ENCODE measurements at regions of chr16 and their contacts with region 1.

Region 1: DNA sequence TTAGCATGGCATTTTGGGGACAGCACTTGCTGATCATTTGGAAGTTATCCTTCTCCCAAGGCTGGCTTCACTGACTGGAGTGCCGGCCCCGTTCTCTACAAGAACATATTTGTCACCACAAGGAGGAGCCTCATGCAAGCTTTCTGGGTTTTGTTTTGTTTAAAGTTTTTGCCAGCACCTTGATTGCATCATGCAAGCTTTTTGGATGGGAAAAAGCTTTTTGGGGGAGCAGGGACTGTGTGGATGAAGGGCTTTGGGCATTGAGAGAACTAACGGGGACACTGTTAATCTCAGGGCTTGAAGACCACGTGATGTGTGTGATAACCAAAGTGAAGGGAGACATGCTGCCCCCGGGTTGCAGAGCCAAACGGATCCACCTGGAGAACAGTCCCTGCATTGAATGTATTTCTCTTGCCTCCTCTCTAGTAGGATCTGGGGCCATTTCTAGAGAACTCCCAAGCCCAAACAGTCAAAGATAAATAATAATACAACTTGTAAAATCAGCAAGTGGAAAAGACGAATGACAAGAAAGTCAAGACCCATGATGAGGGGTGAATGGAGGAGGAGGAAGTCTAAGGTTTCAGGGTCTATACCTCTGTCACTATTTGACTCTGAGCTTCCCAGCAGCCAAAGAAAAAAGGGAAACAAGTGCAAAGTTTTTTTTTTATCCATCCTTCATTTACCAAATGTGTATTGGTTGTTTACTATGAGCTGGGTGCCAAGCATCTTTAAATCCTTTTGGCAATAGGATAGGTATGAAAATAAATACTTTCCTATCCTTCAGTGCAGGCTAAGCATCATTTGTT is 17.2 kb downstream of the TMEM114 start:
- DNase-seq: peak; percentile 24
- H3K4me3 ChIP-seq: no peak overlapping the region
- H3K27ac ChIP-seq: no peak overlapping the region
- H3K4me1 ChIP-seq: no peaks in the 10 kb centered on the region
- H3K27me3 ChIP-seq: no peaks in the 10 kb centered on the region
- CTCF ChIP-seq: peak; percentile 33 to 67

Region 2: GRCh38 chr16:7456211-7456610 is 1116.9 kb before region 1 on chr16:
- CTCF ChIA-PET with region 1: no interaction called
- dilution Hi-C with region 1: no loop called
- in situ Hi-C with region 1: no loop called
- intact Hi-C with region 1: no loop called
- DNase-seq: no peak
- H3K4me3 ChIP-seq: no peak overlapping the region
- H3K27ac ChIP-seq: no peak overlapping the region
- H3K4me1 ChIP-seq: no peaks in the 10 kb centered on the region
- H3K27me3 ChIP-seq: no peaks in the 10 kb centered on the region
- CTCF ChIP-seq: no peak

Region 3: DNA sequence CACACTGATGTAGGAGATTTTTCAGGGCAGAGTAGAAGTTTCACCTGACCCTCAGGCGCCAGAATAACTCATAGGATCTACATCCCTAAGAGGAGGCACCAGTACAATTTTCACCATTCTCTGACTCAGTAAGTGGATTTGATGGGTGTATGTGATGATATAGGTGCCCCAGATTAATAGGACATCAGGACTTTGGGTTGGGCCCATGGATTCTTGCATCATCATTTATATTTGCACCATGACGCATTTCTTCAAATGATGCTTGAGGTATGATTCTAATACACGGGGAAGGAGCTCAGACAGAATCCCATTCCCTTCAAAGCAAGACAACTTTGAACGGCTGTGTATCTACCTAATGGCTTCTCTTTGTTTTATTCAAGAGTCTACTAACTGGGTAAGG is 156.0 kb before region 1 on chr16:
- CTCF ChIA-PET with region 1: no interaction called
- dilution Hi-C with region 1: no loop called
- in situ Hi-C with region 1: no loop called
- intact Hi-C with region 1: no loop called
- DNase-seq: no peak
- H3K4me3 ChIP-seq: no peak overlapping the region
- H3K27ac ChIP-seq: no peak overlapping the region
- H3K4me1 ChIP-seq: no peaks in the 10 kb centered on the region
- H3K27me3 ChIP-seq: no peaks in the 10 kb centered on the region
- CTCF ChIP-seq: no peak

Region 4: DNA sequence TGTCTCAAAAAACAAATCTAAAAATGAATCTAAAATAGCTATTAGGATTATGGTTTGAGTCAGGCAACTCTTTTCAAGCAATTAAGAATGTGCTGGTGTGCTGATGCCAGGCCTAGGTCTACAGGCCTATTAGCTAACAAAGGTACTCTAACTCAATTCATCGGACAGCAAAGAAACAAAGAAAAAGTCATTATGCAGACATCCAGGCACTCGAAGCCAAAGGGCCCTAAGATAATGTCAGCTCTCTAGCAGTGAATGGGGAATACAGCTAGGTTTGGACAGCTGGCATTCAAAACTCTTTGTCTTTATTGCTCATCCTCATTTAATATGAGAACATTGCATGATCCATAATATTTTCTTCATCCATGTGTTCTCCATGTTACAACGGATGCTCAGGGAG is 91.3 kb before region 1 on chr16:
- CTCF ChIA-PET with region 1: no interaction called
- dilution Hi-C with region 1: no loop called
- in situ Hi-C with region 1: no loop called
- intact Hi-C with region 1: no loop called
- DNase-seq: no peak
- H3K4me3 ChIP-seq: no peak overlapping the region
- H3K27ac ChIP-seq: no peak overlapping the region
- H3K4me1 ChIP-seq: no peaks in the 10 kb centered on the region
- H3K27me3 ChIP-seq: no peaks in the 10 kb centered on the region
- CTCF ChIP-seq: no peak

Region 5: DNA sequence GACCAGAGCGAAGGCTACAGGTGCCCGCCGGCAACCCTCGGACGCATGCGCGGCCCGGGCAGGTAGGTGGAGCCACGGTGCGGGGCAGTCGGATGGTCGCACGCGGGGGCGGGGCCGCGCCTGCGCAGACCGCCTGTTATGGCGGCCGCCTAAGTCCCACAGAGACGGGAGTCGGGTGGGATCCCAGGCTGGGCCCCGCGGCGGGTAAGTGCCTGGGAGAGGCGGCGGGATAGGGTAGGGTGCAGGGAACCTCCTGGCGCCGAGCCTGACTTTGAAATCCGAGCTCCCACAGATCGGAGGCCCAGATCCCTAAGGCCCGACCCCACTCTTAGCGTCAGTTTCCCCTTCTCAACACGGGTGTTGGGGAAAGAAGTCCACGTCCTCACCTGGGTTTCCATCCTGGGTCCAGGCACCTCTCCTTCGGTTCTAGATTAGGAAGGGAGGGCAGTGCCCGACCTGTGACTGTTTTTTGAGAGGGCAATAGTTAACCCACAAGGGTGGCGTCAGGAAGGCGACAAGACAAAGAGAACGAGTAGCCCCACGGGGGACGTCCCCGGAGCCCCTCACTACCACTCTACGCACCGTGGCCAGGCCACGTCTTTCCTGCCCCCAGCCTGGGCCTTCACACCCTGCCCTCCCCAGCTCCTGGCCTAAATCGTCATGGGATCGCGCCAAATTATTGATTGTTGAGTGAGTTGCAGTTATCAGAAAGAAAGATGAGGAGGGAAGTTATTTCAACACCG is 48.6 kb after region 1 on chr16 and contains the start of gene METTL22:
- CTCF ChIA-PET with region 1: no interaction called
- dilution Hi-C with region 1: no loop called
- in situ Hi-C with region 1: loop called in 1 of 2 experiments (anchors 5 kb)
- intact Hi-C with region 1: loop called (anchors 2 kb)
- DNase-seq: peak; percentile 74
- H3K4me3 ChIP-seq: peak within 1 kb of the TSS; percentile 63 to 85 (median 79)
- H3K27ac ChIP-seq: peak within 1 kb of the TSS; percentile 83
- H3K4me1 ChIP-seq: peaks cover 10% of the 10 kb centered on the region
- H3K27me3 ChIP-seq: no peaks in the 10 kb centered on the region
- CTCF ChIP-seq: no peak
- total RNA-seq, gene METTL22: 35.2 to 40.9 TPM

Region 6: GRCh38 chr16:8634991-8635736 is 62.0 kb after region 1 on chr16:
- CTCF ChIA-PET with region 1: interaction called, 7 read pairs
- dilution Hi-C with region 1: loop called (anchors 5 kb)
- in situ Hi-C with region 1: no loop called
- intact Hi-C with region 1: loop called (anchors 1 kb)
- DNase-seq: no peak
- H3K4me3 ChIP-seq: no peak overlapping the region
- H3K27ac ChIP-seq: no peak overlapping the region
- H3K4me1 ChIP-seq: no peaks in the 10 kb centered on the region
- H3K27me3 ChIP-seq: no peaks in the 10 kb centered on the region
- CTCF ChIP-seq: peak; percentile 31 to 49